MCF 10A (cell line): ENCODE measurements at regions of chr14 and their contacts with region 1.

Region 1: GRCh38 chr14:90758028-90758889 is 58.0 kb downstream of the TTC7B start:
- DNase-seq: peak; percentile 87
- H3K4me3 Mint-ChIP-seq: peak overlapping the region; percentile 72
- H3K27ac Mint-ChIP-seq: no peak overlapping the region
- H3K4me1 Mint-ChIP-seq: no peaks in the 10 kb centered on the region
- H3K27me3 Mint-ChIP-seq: no peaks in the 10 kb centered on the region
- CTCF ChIP-seq: peak; percentile 75

Region 2: DNA sequence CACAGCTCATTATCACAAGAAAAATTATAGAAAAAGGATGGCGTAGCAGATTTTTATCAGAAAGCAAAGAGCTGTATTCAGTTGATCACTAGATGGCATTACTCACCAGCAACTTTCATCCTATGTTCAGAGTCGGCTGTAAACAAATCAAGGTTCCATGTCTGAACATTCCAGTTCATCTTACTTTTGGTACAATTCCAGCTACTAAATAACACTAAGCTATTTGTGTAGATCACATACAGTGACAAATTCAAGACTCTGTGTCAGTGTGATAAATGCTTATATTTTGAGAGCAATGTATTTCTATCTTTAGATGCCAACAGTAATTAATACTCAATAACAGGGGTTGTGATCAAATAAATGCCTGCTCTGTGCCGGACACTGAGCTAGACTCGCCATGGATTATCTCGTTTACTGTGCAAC is 456.6 kb before region 1 on chr14:
- CTCF ChIA-PET with region 1: interaction called, 14 read pairs
- POLR2A ChIA-PET with region 1: no interaction called
- intact Hi-C with region 1: loop called (anchors 1 kb)
- DNase-seq: peak; percentile 41
- H3K4me3 Mint-ChIP-seq: no peak overlapping the region
- H3K27ac Mint-ChIP-seq: peak overlapping the region; percentile 63
- H3K4me1 Mint-ChIP-seq: no peaks in the 10 kb centered on the region
- H3K27me3 Mint-ChIP-seq: no peaks in the 10 kb centered on the region
- CTCF ChIP-seq: peak; percentile 23

Region 3: DNA sequence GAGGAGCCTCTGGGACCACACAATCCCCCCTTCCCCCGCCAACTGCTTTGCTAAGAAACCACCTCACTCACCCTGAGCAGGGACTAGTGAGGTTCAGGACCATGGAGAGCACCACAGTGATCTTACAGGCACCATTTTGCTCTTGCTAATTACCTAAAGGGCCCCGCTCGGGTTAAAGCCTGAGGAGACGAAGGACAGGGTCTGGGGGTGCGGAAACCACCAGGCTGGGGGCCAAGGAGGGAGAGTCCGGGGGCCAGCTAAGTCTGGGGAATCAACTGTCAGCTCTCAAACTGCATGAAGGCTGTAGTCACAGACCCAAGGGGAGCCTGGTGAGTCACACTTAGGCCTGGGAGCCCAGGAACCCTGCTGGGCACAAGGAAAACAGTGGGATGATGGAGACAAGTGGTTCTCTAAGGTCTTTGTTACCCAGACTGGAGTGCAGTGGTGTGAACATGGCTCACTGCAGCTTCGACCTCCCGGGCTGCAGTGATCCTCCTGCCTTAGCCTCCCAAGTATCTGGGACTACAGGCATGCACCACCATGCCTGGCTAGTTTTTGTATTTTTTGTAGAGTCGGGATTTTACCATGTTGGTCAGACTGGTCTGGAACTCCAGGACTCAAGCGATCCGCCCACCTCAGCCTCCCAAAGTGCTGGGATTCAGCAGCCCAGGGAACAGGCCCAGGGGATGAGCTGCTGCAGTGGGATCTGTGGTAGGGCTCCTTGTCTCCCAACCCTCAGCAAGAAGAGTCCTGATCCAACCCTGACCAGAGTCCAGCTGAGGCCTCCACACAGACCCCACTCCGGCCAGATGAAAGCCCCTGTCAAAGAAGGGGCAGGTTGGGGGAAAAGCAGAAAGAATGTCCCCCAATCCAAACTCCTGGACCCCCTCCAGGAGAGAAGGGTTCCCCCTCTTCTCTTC is 262.6 kb before region 1 on chr14:
- CTCF ChIA-PET with region 1: no interaction called
- POLR2A ChIA-PET with region 1: no interaction called
- intact Hi-C with region 1: no loop called
- DNase-seq: peak; percentile 83
- H3K4me3 Mint-ChIP-seq: no peak overlapping the region
- H3K27ac Mint-ChIP-seq: no peak overlapping the region
- H3K4me1 Mint-ChIP-seq: no peaks in the 10 kb centered on the region
- H3K27me3 Mint-ChIP-seq: peaks cover 16% of the 10 kb centered on the region
- CTCF ChIP-seq: no peak

Region 4: DNA sequence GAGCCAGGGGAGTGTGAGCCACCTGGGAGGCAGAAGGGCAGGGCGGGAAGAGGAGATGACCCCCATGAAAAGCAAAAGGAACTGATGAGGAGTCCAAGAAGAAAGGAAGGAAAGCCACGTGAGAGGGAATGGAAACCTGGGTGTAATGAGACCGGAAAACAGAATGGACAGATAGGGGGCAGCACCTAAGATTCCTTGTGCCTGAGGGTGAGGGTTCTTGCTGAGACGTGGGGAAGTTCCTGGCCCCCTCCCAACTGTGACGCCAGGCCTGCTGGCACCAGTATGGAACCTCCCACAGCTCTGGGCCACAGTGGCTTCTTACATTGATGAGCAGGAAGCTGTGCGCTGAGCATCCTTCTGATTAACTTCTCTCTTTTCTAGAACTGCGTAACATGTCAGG is 27.2 kb after region 1 on chr14:
- CTCF ChIA-PET with region 1: interaction called, 12 read pairs
- POLR2A ChIA-PET with region 1: no interaction called
- intact Hi-C with region 1: no loop called
- DNase-seq: peak; percentile 45
- H3K4me3 Mint-ChIP-seq: no peak overlapping the region
- H3K27ac Mint-ChIP-seq: no peak overlapping the region
- H3K4me1 Mint-ChIP-seq: peaks cover 14% of the 10 kb centered on the region
- H3K27me3 Mint-ChIP-seq: no peaks in the 10 kb centered on the region
- CTCF ChIP-seq: no peak

Region 5: GRCh38 chr14:90795746-90796145 is 37.5 kb after region 1 on chr14:
- CTCF ChIA-PET with region 1: interaction called, 22 read pairs
- POLR2A ChIA-PET with region 1: no interaction called
- intact Hi-C with region 1: no loop called
- DNase-seq: peak; percentile 55
- H3K4me3 Mint-ChIP-seq: no peak overlapping the region
- H3K27ac Mint-ChIP-seq: no peak overlapping the region
- H3K4me1 Mint-ChIP-seq: peaks cover 7% of the 10 kb centered on the region
- H3K27me3 Mint-ChIP-seq: no peaks in the 10 kb centered on the region
- CTCF ChIP-seq: no peak

Region 6: DNA sequence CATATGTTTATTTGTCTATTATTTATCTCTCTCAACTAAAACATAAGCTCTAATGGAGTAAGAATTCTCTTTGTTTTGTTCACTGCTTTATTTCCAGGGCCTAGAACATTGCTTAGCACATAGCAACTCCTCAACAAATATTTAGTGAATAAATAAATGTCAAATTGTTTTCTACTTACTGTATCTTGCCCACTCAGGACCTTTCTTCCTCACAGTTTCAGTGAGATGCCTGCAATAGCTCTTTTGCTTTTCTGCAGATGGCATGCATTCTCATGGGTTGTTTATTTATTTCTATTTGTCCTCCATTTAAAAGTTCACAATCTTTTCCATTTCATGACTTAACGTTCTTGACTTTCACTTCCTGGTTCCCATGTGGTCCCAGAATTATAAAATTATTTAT is 152.9 kb after region 1 on chr14:
- CTCF ChIA-PET with region 1: no interaction called
- POLR2A ChIA-PET with region 1: no interaction called
- intact Hi-C with region 1: no loop called
- DNase-seq: no peak
- H3K4me3 Mint-ChIP-seq: no peak overlapping the region
- H3K27ac Mint-ChIP-seq: no peak overlapping the region
- H3K4me1 Mint-ChIP-seq: peaks cover 6% of the 10 kb centered on the region
- H3K27me3 Mint-ChIP-seq: no peaks in the 10 kb centered on the region
- CTCF ChIP-seq: no peak